ENCODE measurements at regions of chr15 and their contacts with region 1.

Region 1: DNA sequence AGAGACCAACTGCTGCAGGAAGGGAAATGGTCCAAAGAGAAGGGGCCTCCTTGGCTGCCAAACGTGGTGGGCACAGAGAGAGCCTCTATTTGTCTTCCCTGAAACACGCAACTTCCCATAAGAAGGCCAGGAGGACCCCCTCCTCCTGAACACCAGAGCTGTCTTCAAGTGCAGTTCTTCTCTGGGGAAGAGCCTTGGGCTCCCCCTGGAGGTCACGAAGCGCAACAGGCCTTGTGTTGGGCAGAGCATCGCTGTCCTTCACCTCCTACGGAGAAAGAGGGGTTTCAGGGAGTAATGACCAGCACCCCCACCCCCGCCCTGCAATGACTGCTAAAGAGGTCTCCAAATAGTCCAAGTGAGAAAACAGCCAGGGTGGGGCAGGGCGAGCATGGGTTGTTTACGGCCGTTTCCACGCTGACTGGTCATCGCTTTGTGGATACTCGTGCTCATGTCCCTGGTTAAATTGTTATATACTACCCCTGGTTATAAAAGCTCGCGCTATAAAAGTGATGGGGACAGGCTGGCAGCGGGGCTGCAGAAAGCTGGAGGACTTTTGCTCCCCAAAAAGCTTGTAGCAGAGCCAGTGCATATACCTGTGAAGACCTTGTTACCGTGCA is 397.5 kb upstream of the ATP10A start:
- DNase-seq: peak; percentile 4
- H3K4me3 ChIP-seq: no peak overlapping the region
- CTCF ChIP-seq: peak; percentile 95

Region 2: GRCh38 chr15:26037369-26037768 is 223.3 kb before region 1 on chr15:
- CTCF ChIA-PET with region 1: interaction called, 40 read pairs
- POLR2A ChIA-PET with region 1: no interaction called
- DNase-seq: no peak
- H3K4me3 ChIP-seq: no peak overlapping the region
- CTCF ChIP-seq: no peak

Region 3: DNA sequence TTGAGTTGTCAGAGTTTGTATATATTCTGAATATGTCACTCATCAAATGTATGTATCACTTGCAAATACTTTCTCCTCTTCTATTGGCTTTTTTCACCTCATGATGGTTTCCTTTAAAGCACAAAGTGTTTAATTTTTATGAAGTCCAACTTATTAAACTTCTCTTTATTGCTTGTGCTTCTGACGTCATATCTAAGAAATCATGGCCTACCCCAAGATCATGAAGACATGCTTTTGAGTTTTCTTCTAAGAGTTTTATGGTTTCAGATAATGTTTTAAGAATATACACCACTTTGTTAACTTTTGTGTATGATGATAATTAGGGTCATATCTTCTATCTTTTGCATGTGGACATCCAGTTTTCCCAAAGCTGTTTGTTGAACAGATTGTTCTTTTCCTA is 19.7 kb after region 1 on chr15:
- CTCF ChIA-PET with region 1: interaction called, 10 read pairs
- POLR2A ChIA-PET with region 1: no interaction called
- DNase-seq: no peak
- H3K4me3 ChIP-seq: no peak overlapping the region
- CTCF ChIP-seq: no peak